ENCODE measurements at regions of chr10 and their contacts with region 1.

Region 1: DNA sequence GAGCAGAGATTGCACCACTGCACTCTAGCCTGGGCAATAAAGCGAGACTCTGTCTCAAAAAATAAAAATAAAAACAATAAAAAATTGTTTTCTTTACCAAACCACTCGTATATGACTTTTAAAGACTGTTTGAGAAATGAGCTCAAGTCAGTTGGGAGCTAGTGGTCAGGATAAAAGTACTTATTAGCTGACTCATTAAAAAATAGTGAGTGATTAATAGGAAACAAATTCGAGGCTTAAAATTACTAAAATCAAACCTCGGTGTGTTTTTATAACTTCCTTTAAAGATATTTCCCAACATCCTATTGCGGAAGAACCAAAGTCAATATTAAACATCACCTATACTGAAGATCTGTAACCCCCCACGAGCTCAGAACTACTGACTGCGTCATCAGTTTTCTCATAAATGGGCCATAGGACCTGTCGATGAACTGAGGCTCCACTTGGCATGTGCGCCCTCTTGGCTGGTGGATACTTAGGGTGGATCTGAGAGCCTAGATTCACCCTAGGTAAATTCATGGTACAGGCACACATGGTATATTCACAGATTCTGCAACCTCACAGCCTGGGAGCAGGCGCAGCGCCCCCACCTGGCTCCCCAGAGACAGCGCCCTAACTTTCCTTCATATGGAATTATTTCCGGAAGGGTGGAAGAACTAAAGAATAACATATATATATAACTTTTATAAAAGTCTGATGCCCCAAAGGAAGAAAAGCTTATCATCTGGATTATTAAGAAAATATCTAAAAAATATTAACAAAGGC is 9.2 kb downstream of the MKI67 start:
- DNase-seq: no peak
- ATAC-seq: no peak
- H3K4me3 Mint-ChIP-seq: no peak overlapping the region
- H3K27ac Mint-ChIP-seq: no peak overlapping the region
- H3K4me1 Mint-ChIP-seq: peaks cover 3% of the 10 kb centered on the region
- H3K27me3 Mint-ChIP-seq: peaks cover 1% of the 10 kb centered on the region
- CTCF ChIP-seq: peak; percentile 26

Region 2: DNA sequence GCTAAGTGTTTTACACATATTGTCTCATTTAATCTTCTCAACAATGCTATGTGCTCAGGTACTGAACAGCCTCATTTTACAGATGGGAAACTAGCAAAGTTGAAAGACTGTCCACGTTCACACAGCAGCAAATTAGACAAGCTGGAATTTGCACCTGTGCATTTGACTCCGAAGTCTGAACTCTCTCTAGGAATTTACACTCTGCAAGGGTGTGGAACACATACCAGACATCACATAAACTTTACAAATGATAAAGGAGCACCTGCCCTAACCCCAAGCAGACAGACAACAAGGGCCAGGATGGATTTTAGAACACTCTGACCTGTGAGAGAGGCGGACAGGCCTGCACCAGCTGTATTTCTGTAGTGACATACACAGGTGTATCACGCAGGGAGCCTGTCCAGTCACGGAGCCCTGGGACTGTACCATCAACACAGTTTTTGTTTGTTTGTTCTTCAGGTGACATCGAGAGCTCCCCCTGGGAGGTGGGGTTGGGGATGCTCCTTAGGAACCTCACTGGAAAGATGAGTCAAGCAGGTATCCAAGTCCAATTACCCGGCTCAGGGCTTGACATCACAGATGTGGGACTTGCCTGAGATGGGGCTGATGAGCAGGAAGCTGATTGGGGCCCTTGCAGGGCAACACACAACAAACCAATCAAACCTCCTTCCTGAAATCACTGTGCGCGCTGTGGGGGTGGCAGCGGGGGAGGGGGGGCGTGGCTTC is 21.8 kb before region 1 on chr10:
- CTCF ChIA-PET with region 1: interaction called, 3 read pairs
- POLR2A ChIA-PET with region 1: interaction called, 10 read pairs
- intact Hi-C with region 1: no loop called
- DNase-seq: peak; percentile 65
- ATAC-seq: peak; percentile 76
- H3K4me3 Mint-ChIP-seq: no peak overlapping the region
- H3K27ac Mint-ChIP-seq: peak overlapping the region; percentile 9
- H3K4me1 Mint-ChIP-seq: peaks cover 24% of the 10 kb centered on the region
- H3K27me3 Mint-ChIP-seq: no peaks in the 10 kb centered on the region
- CTCF ChIP-seq: no peak

Region 3: DNA sequence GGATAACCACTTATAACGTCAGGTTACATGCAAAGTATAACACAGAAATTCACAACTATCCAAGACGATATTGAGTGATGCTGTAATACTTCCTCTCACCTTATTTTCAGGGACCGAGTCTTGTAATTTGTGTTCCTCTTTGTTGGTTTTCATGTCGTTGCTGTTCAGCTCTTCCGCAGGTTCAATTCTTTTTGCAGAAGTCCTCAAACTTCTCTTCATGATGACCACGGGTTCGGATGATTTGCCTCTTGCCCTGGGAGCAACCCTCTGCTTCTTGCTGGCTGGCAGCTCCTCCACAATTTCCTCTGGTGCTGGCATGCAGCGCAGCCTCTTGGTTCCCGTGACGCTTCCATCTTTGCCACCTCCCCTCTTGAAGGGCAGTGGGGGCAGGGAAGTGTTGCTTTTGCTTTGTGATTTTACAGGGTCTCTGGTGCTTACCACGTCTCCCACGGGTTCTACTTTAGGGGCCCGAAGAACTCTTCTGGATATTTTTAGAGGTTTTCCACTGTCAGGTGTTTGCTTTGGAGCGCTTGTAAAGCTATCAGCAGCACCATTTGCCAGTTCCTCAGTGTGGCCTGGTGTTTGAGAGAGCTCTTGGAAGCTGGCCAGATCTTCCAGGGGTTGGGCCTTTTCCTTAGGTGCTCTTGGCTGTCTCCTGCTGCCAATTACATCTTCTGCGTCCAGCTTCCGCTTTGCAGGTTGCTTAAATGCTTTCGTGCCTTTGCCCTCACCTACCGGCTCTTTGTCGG is 14.4 kb before region 1 on chr10:
- CTCF ChIA-PET with region 1: interaction called, 5 read pairs
- POLR2A ChIA-PET with region 1: interaction called, 13 read pairs
- intact Hi-C with region 1: no loop called
- DNase-seq: no peak
- ATAC-seq: no peak
- H3K4me3 Mint-ChIP-seq: no peak overlapping the region
- H3K27ac Mint-ChIP-seq: peak overlapping the region; percentile 6
- H3K4me1 Mint-ChIP-seq: peaks cover 24% of the 10 kb centered on the region
- H3K27me3 Mint-ChIP-seq: no peaks in the 10 kb centered on the region
- CTCF ChIP-seq: no peak

Region 4: GRCh38 chr10:128221117-128221516 is 104.1 kb after region 1 on chr10:
- CTCF ChIA-PET with region 1: no interaction called
- POLR2A ChIA-PET with region 1: no interaction called
- intact Hi-C with region 1: no loop called
- DNase-seq: no peak
- ATAC-seq: no peak
- H3K4me3 Mint-ChIP-seq: no peak overlapping the region
- H3K27ac Mint-ChIP-seq: no peak overlapping the region
- H3K4me1 Mint-ChIP-seq: peaks cover 13% of the 10 kb centered on the region
- H3K27me3 Mint-ChIP-seq: peaks cover 4% of the 10 kb centered on the region
- CTCF ChIP-seq: no peak

Region 5: DNA sequence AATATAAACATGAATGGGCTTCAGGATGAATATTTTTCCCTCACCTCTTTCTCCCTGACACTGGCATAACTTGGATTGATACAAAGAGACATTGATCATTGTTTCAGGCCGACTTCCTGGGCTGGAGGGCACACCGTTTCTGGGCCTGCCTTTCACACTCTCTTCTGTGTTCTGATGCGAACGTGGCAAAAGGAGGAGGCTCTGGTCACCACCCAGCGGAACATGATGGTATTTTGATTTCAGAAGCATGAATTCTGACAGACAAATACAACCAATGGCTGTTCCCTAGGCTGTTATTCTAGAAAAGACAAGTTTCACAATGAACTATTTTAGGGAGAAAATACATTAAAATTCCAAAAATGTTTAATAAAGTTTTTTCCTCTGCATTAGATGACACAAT is 543.7 kb after region 1 on chr10:
- CTCF ChIA-PET with region 1: no interaction called
- POLR2A ChIA-PET with region 1: no interaction called
- intact Hi-C with region 1: no loop called
- DNase-seq: no peak
- ATAC-seq: no peak
- H3K4me3 Mint-ChIP-seq: no peak overlapping the region
- H3K27ac Mint-ChIP-seq: no peak overlapping the region
- H3K4me1 Mint-ChIP-seq: no peaks in the 10 kb centered on the region
- H3K27me3 Mint-ChIP-seq: peaks cover 3% of the 10 kb centered on the region
- CTCF ChIP-seq: no peak

Measured in activated CD8-positive, alpha-beta T cell treated with anti-CD3 and anti-CD28 coated beads for 36 hours (primary cell).